AG04450 (cell line): ENCODE measurements at regions of chr2 and their contacts with region 1.

Region 1: DNA sequence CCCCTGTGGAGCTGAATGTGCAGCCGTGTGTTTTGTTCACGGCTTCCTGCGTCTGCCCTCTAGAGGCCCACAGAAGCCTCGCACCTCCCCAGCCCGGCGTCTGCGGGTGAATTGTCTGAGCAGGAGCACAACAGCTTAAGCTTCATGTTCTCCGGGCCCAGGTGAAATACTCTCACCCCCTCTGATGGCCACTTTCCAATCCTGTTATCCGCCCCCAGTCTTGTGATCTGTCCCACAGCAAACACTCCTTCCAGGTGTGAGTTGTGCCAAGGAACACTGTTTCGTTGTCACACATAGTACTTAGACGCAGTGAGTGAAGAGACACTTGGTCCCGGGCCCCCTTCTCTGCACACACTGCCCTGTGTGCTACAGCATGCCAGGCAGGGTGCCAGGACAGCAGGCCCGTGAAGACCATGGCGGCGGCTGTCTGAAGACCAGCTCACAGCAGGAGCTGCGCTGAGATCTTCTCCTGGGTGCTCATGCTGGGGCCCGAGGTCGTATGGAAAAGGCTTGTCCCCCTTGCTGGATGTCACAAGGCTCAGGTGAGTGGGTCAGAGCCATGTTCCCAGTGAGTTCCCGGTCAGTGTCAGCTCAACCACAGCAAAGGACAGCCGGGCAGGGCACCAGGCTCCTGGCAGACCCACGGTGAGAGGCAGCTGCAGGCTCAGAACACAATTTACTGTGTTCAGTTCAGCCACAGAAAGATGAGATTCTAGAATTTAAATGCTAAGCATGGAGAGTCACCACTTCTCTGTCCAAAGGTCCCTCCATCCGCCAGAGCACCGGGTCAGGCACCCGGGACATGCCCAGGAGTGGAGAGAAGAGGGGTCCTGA is 6.8 kb upstream of the PXDN start:
- DNase-seq: peak; percentile 72
- H3K4me3 ChIP-seq: no peak overlapping the region
- H3K27ac ChIP-seq: no peak overlapping the region
- H3K27me3 ChIP-seq: peaks cover 4% of the 10 kb centered on the region
- CTCF ChIP-seq: peak; percentile 95

Region 2: GRCh38 chr2:1550658-1551316 is 200.4 kb before region 1 on chr2:
- CTCF ChIA-PET with region 1: interaction called, 21 read pairs
- POLR2A ChIA-PET with region 1: no interaction called
- DNase-seq: no peak
- H3K4me3 ChIP-seq: no peak overlapping the region
- H3K27ac ChIP-seq: no peak overlapping the region
- H3K27me3 ChIP-seq: peaks cover 4% of the 10 kb centered on the region
- CTCF ChIP-seq: peak; percentile 87

Region 3: GRCh38 chr2:1675633-1676032 is 75.5 kb before region 1 on chr2:
- CTCF ChIA-PET with region 1: interaction called, 30 read pairs
- POLR2A ChIA-PET with region 1: interaction called, 5 read pairs
- DNase-seq: peak; percentile 90
- H3K4me3 ChIP-seq: no peak overlapping the region
- H3K27ac ChIP-seq: peak overlapping the region; percentile 83
- H3K27me3 ChIP-seq: no peaks in the 10 kb centered on the region
- CTCF ChIP-seq: peak; percentile 85

Region 4: GRCh38 chr2:1721706-1722646 is 29.2 kb before region 1 on chr2:
- CTCF ChIA-PET with region 1: interaction called, 14 read pairs
- POLR2A ChIA-PET with region 1: no interaction called
- DNase-seq: no peak
- H3K4me3 ChIP-seq: no peak overlapping the region
- H3K27ac ChIP-seq: peak overlapping the region; percentile 77
- H3K27me3 ChIP-seq: no peaks in the 10 kb centered on the region
- CTCF ChIP-seq: no peak

Region 5: DNA sequence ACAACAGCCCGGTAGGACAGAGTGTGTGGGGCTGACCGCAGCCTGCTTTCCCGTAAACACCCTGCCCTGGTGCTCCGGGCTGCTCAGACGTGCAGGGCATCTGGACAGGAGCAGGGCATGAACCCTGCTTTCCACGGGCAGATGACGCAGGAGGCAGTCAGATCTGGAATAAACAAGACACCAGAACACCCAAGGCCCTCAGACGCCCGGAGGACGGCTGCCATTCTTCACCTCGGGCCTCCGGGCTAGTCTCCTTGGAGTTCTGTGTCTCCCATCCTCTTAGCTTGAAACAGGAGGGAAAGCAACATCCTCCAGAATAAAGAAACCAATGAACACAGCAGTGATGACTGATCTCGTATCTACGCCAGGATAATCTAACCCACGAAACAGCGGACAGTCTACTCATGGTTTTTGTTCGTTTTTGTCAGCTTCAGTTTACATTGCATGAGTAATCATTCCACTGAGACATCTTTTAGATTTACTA is 14.1 kb before region 1 on chr2:
- CTCF ChIA-PET with region 1: interaction called, 53 read pairs
- POLR2A ChIA-PET with region 1: interaction called, 36 read pairs
- DNase-seq: peak; percentile 76
- H3K4me3 ChIP-seq: peak overlapping the region; percentile 44
- H3K27ac ChIP-seq: peak overlapping the region; percentile 94
- H3K27me3 ChIP-seq: no peaks in the 10 kb centered on the region
- CTCF ChIP-seq: no peak

Region 6: GRCh38 chr2:1791685-1792435 is 40.7 kb after region 1 on chr2:
- CTCF ChIA-PET with region 1: interaction called, 18 read pairs
- POLR2A ChIA-PET with region 1: interaction called, 5 read pairs
- DNase-seq: peak; percentile 71
- H3K4me3 ChIP-seq: no peak overlapping the region
- H3K27ac ChIP-seq: peak overlapping the region; percentile 82
- H3K27me3 ChIP-seq: no peaks in the 10 kb centered on the region
- CTCF ChIP-seq: 0 out of 2 replicates have a peak, but pooled peaks have one; percentile 9